Left ventricle myocardium inferior (tissue), 1 donor: ENCODE measurements at regions of chr7 and their contacts with region 1.

Region 1: GRCh38 chr7:39465055-39465929 is 100.9 kb upstream of the YAE1 start:
- DNase-seq: no peak
- H3K4me3 ChIP-seq: no peak overlapping the region
- H3K27ac ChIP-seq: no peak overlapping the region
- H3K4me1 ChIP-seq: no peaks in the 10 kb centered on the region
- H3K27me3 ChIP-seq: peaks cover 35% of the 10 kb centered on the region
- CTCF ChIP-seq: peak; percentile 79

Region 2: DNA sequence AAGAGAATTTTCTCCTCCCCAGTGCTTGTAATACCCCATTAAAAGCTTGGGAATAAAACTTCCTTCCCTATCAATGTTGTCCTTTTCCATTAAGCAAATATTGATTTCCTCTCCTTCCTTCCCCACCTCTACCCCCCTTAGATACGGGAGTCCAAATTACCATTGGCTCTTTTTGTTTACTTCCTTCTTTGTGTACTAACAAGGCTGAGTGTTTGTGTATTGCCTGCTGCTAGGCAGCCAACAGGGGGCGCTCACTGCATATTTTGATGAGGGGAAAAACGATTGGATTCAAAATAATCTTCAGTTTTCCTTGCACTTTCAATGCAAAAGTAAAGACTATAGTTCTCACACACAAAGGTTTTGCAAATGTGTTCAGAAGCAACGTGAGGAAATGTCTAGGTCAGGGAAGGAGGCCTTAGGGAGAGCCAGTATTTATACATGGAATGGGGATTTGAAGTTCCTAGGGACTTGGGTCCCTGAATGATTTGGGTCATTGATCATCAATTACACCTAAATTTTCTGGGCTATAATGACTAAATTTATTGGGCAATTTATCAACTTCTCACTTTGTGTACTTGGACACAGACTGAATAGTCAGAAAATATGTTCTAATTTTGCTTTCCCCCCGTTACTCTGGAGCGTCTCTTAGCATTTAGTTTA is 532.7 kb before region 1 on chr7:
- intact Hi-C with region 1: loop called (anchors 10 kb)
- DNase-seq: peak; percentile 34
- H3K4me3 ChIP-seq: no peak overlapping the region
- H3K27ac ChIP-seq: no peak overlapping the region
- H3K4me1 ChIP-seq: no peaks in the 10 kb centered on the region
- H3K27me3 ChIP-seq: peaks cover 3% of the 10 kb centered on the region
- CTCF ChIP-seq: peak; percentile 83